ENCODE measurements at regions of chr11 and their contacts with region 1.

Region 1: GRCh38 chr11:32792948-32793475 is 1.4 kb downstream of the CCDC73 start:
- DNase-seq: peak in 5 of 6 donors; percentile 30 to 72 (median 42)
- ATAC-seq: peak; percentile 83 to 98 (median 95)
- H3K4me3 ChIP-seq: peak overlapping the region in 1 of 4 donors; percentile 22
- H3K27ac ChIP-seq: no peak overlapping the region
- H3K4me1 ChIP-seq: no peaks in the 10 kb centered on the region
- H3K27me3 ChIP-seq: no peaks in the 10 kb centered on the region
- CTCF ChIP-seq: peak; percentile 27 to 62 (median 44)

Region 2: GRCh38 chr11:32312865-32313403 is 480.1 kb before region 1 on chr11:
- intact Hi-C with region 1: loop called in 1 of 3 experiments (anchors 10 kb)
- DNase-seq: peak in 3 of 6 donors; percentile 3 to 24 (median 19)
- ATAC-seq: peak; percentile 67 to 88 (median 83)
- H3K4me3 ChIP-seq: no peak overlapping the region
- H3K27ac ChIP-seq: no peak overlapping the region
- H3K4me1 ChIP-seq: no peaks in the 10 kb centered on the region
- H3K27me3 ChIP-seq: no peaks in the 10 kb centered on the region
- CTCF ChIP-seq: peak; percentile 34 to 52 (median 44)

Region 3: DNA sequence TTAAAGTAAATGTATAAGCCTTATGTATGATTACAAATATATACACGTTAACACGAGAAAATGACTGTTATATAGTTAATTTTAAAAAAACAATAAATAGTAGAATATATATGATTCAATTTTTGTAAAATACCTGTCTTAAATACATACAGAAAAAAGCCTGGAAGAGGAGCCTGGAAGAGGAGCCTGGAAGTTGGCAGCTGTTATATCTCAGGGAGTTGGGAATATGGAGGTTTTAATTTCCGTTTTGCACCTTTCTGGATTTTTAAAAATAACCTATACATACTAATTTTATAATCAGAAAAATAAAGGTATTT is 469.2 kb before region 1 on chr11:
- intact Hi-C with region 1: loop called in 2 of 3 experiments (anchors 10 kb)
- DNase-seq: no peak
- ATAC-seq: no peak
- H3K4me3 ChIP-seq: no peak overlapping the region
- H3K27ac ChIP-seq: no peak overlapping the region
- H3K4me1 ChIP-seq: no peaks in the 10 kb centered on the region
- H3K27me3 ChIP-seq: peaks cover 0 to 6% (median 0%) of the 10 kb centered on the region in 4 donors
- CTCF ChIP-seq: no peak